ENCODE measurements at regions of chr22 and their contacts with region 1.

Region 1: GRCh38 chr22:23305922-23306374 is 125.6 kb downstream of the BCR start:
- DNase-seq: no peak
- ATAC-seq: no peak
- H3K4me3 ChIP-seq: no peak overlapping the region
- H3K27ac ChIP-seq: no peak overlapping the region
- H3K4me1 ChIP-seq: peaks cover 0 to 5% of the 10 kb centered on the region in 2 experiments; a peak in 2 of 5 replicates
- H3K27me3 ChIP-seq: no peaks in the 10 kb centered on the region
- CTCF ChIP-seq: no peak
- EP300 ChIP-seq: no peak
- POLR2A ChIP-seq: no peak
- RAD21 ChIP-seq: no peak

Region 2: GRCh38 chr22:23322547-23322946 is 16.6 kb after region 1 on chr22:
- CTCF ChIA-PET with region 1: no interaction called
- POLR2A ChIA-PET with region 1: no interaction called
- in situ Hi-C with region 1: no loop called
- intact Hi-C with region 1: no loop called
- DNase-seq: no peak
- ATAC-seq: no peak
- H3K4me3 ChIP-seq: no peak overlapping the region
- H3K27ac ChIP-seq: no peak overlapping the region
- H3K4me1 ChIP-seq: no peaks in the 10 kb centered on the region
- H3K27me3 ChIP-seq: no peaks in the 10 kb centered on the region
- CTCF ChIP-seq: no peak
- EP300 ChIP-seq: no peak
- POLR2A ChIP-seq: no peak
- RAD21 ChIP-seq: no peak

Region 3: DNA sequence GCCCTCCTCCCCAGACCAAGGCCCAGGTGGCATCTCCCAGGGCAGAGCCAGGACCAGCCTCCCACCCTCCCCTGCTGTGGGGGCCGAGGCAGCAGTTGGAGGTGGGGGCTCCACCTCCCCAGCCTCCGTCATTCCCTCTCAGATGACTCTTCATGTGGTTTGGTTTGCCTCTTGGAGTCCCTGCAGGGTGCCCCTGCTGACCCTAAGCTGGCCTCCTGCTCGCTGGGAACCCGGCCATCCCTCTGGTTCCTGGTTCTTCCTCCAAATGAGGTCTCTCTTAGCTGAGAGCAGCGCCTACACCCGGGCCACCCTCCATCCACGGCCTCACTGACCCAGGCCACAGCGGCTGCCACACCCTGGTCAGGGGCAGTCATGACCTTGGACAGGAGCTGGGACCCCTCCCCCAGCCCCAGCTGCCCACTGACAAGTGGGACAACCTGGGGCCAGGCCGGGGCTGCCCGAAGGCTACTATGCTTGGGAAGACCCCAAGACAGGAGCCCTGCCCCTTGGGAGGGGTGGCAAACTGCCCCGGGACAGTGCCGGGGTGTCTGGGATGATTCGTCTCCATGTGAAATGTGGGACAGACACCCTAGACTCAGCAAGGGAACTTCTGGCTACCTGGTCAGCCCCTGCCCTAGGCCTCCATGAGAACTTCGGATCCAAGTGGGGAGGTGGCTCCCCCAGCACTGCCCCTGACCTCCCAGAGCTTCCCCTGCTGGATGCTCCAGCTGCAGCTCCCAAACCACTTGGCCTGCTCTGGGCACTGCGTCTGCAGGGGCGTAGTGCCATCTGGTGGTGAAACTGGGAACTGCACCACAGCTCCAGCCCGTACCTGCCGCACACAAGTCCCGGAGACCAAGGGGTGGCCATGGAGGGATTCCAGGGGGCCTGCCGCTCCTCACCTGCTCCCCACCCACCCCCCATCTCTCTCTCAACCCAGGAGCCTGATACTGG is 79.6 kb after region 1 on chr22:
- CTCF ChIA-PET with region 1: no interaction called
- POLR2A ChIA-PET with region 1: no interaction called
- in situ Hi-C with region 1: loop called (anchors 10 kb)
- intact Hi-C with region 1: no loop called
- DNase-seq: peak; percentile 74 to 82 (median 80)
- ATAC-seq: peak; percentile 95
- H3K4me3 ChIP-seq: no peak overlapping the region
- H3K27ac ChIP-seq: no peak overlapping the region
- H3K4me1 ChIP-seq: peaks cover 0 to 27% of the 10 kb centered on the region in 2 experiments; a peak in 1 of 5 replicates
- H3K27me3 ChIP-seq: peaks cover 0 to 5% of the 10 kb centered on the region in 2 experiments; a peak in 1 of 5 replicates
- CTCF ChIP-seq: peak; percentile 89 to 97 (median 93)
- EP300 ChIP-seq: no peak
- POLR2A ChIP-seq: no peak
- RAD21 ChIP-seq: peak; percentile 80 to 89